ENCODE measurements at regions of chr12 and their contacts with region 1.

Region 1: GRCh38 chr12:104371043-104371870 is 67.7 kb downstream of the EID3 start:
- DNase-seq: no peak
- H3K4me3 ChIP-seq: no peak overlapping the region
- H3K27ac ChIP-seq: no peak overlapping the region
- H3K4me1 ChIP-seq: no peaks in the 10 kb centered on the region
- H3K27me3 ChIP-seq: no peaks in the 10 kb centered on the region
- CTCF ChIP-seq: no peak
- POLR2A ChIP-seq: no peak

Region 2: DNA sequence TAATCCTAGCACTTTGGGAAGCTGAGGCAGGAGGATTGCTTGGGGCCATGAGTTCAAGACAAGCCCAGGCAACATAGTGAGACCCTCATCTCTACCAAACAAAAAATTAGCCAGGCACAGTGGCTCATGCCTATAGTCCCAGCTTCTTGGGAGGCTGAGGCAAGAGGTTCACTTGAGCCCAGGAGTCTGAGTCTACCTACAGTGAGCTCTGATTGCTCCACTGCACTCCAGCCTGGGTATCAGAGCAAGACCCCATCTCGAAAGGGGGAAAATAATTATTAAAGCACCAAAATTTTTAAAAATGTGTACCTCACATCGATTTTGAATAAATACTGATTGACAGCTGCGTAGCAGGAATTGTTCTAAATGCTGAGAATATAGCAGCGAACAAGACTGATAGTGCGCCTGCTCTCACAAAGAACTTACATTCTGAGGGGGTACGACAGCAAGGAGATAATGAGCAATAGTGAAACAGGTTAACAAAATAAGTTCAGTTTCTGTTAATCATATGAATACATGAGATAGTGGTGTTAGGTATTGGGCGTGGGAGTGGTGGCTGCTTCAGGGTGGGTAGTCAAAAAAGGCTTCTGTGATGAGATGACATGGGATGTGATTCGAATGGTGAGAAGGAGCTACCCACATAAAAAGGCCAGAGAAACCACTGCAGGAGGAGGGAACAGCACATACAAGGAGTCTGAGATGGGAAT is 287.3 kb before region 1 on chr12:
- intact Hi-C with region 1: no loop called
- DNase-seq: no peak
- H3K4me3 ChIP-seq: no peak overlapping the region
- H3K27ac ChIP-seq: no peak overlapping the region
- H3K4me1 ChIP-seq: no peaks in the 10 kb centered on the region
- H3K27me3 ChIP-seq: no peaks in the 10 kb centered on the region
- CTCF ChIP-seq: no peak
- POLR2A ChIP-seq: no peak

Region 3: DNA sequence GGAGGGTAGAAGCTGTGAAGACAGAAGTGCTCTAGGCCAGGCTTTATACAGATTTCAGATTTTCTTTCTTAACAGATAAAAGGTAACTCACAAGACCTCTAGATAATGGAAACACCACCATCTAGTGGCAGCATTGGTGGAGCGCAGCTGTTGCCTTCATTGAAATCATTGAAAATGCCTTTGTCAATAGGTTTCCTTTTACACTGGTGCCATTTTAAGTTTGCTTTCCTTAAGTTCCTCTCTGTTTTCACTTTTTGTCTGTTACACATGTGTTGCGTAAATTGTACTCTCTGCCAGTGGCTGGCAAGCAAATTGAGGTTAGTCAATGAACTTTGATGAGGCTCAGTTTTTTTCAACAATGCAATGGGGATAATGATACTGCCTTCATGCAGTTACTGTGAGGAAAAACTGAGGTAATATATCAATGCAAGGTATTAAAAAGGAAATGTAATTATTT is 681.9 kb after region 1 on chr12:
- intact Hi-C with region 1: loop called (anchors 10 kb)
- DNase-seq: no peak
- H3K4me3 ChIP-seq: no peak overlapping the region
- H3K27ac ChIP-seq: no peak overlapping the region
- H3K4me1 ChIP-seq: no peaks in the 10 kb centered on the region
- H3K27me3 ChIP-seq: no peaks in the 10 kb centered on the region
- CTCF ChIP-seq: peak; percentile 84 to 94 (median 86)
- POLR2A ChIP-seq: no peak